ENCODE measurements at regions of chr2 and their contacts with region 1.

Region 1: DNA sequence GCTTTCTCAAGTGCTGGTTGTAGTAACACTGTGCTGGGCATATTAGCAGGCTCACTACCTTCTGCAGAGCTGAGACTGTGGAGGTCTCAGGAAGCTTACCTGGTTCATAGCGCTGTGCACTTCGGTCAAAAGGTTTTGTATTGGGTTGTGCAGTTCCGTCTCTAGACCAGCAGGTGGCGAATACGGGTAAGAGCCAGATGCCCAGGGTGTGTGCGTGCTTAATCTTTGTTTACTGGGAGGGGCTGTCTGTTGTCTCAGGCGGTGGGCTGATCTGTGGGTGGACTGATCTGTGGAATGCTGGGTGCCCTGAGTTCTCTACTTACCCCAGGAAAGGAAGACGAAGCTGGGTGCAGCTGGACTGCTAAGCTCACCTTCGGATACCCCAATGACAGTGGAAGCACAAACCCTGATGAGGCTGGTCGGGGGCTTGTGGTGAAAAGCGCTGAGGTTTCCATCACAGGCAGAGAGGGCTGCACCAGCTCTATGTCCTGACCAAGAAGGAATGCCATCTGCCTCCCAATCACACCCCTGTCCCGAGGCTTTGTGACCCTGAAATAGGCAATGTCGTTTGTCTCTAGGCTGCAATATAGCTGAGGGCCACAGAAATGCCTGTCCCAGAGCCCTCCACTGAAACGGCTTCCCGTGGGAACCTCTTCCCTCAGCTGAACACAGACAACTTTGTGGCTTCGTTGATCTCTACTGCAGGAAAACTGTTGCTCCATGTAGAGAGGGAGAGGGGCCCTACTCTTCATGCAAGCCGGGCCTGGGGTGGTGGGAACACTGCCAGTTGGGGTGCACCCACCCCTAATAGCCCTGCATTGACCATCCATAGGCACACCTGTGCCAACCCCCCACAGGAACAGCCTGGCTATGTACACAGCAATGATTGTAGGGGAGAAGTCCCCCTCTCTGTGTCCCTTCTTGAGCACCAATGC is 45.9 kb upstream of the FAM117B start:
- DNase-seq: peak; percentile 64
- ATAC-seq: peak; percentile 97
- H3K4me3 ChIP-seq: no peak overlapping the region
- H3K27ac ChIP-seq: no peak overlapping the region
- H3K4me1 ChIP-seq: peaks cover 0 to 9% of the 10 kb centered on the region in 2 experiments; a peak in 2 of 4 replicates
- H3K27me3 ChIP-seq: no peaks in the 10 kb centered on the region
- CTCF ChIP-seq: peak; percentile 83 to 94 (median 89)
- POLR2A ChIP-seq: no peak
- RAD21 ChIP-seq: peak; percentile 91

Region 2: GRCh38 chr2:202375609-202376408 is 213.1 kb before region 1 on chr2 and contains the start of gene BMPR2:
- CTCF ChIA-PET with region 1: no interaction called
- POLR2A ChIA-PET with region 1: no interaction called
- RAD21 ChIA-PET with region 1: no interaction called
- intact Hi-C with region 1: no loop called
- DNase-seq: peak; percentile 56
- ATAC-seq: peak; percentile 87
- H3K4me3 ChIP-seq: peak within 1 kb of the TSS; percentile 69 to 80
- H3K27ac ChIP-seq: peak within 1 kb of the TSS; percentile 74
- H3K4me1 ChIP-seq: peaks cover 13 to 17% of the 10 kb centered on the region in 2 experiments; a peak in 3 of 4 replicates
- H3K27me3 ChIP-seq: no peaks in the 10 kb centered on the region
- CTCF ChIP-seq: no peak
- POLR2A ChIP-seq: peak; percentile 68
- RAD21 ChIP-seq: no peak
- total RNA-seq, gene BMPR2: 12.8 TPM

Region 3: DNA sequence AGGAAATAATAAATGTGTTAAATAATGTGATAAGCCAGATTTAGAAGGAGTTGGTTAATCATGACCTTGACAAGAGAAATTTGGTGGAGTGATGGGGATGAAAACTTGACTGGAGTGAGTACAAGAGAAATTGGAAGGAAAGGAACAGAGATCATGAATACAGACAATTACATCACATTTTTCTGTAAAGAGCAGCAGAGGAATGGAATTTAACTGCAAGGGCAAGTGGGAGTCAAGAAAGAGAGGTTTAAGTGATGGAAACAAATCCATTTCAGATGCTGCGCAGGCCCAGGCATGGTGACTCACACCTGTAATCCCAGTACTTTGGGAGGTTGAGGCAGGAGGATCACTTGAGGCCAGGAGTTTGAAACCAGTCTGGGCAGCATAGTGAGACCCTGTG is 236.0 kb after region 1 on chr2:
- CTCF ChIA-PET with region 1: interaction called, 5 read pairs
- POLR2A ChIA-PET with region 1: no interaction called
- RAD21 ChIA-PET with region 1: no interaction called
- intact Hi-C with region 1: loop called (anchors 5 kb)
- DNase-seq: no peak
- ATAC-seq: no peak
- H3K4me3 ChIP-seq: no peak overlapping the region
- H3K27ac ChIP-seq: no peak overlapping the region
- H3K4me1 ChIP-seq: no peaks in the 10 kb centered on the region
- H3K27me3 ChIP-seq: no peaks in the 10 kb centered on the region
- CTCF ChIP-seq: no peak
- POLR2A ChIP-seq: no peak
- RAD21 ChIP-seq: no peak

Region 4: DNA sequence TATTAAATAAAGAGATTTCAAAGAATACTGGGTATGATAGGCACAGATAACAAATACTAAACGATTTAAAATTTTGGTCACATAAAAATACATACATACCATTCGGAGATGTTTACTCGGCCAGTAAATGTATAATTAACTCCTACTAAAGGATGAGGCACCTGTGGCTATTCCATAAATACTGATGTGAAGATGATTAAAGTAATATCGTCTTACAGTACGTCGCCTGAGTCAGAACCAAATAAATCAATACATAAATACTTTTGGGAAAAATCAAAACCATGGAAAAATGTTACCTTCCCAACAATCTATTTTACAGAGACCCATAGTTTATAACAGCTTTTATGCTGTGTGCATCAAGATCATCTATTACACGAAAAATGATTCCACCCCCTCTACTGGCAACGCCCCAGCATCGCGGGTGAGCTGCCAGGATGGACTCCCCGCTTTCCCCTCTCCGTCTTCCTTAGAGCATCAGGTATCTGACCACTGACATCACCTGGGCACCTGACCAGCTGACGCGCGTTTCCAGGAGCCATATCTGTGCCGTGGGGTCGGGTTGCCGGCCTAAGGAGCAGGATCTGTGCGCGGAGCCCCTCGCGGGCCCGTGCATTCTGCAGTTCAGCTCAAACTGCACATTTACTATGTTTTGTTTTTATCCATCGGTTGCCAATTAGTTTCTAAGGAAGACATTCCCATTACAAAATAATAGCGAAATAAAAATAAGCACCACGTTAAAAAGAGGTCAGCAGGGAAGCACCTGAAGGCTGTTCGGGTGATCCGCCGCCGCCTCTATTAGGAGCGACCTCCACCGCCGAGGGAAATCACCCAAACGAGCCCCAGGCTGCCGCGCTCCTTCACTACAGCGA is 281.8 kb after region 1 on chr2:
- CTCF ChIA-PET with region 1: interaction called, 4 read pairs
- POLR2A ChIA-PET with region 1: no interaction called
- RAD21 ChIA-PET with region 1: no interaction called
- intact Hi-C with region 1: loop called (anchors 5 kb)
- DNase-seq: peak; percentile 78
- ATAC-seq: peak; percentile 86
- H3K4me3 ChIP-seq: peak overlapping the region; percentile 61 to 68
- H3K27ac ChIP-seq: peak overlapping the region; percentile 38
- H3K4me1 ChIP-seq: peaks cover 7 to 13% of the 10 kb centered on the region in 2 experiments
- H3K27me3 ChIP-seq: no peaks in the 10 kb centered on the region
- CTCF ChIP-seq: peak; percentile 34 to 59 (median 55); a peak in 5 of 6 replicates
- POLR2A ChIP-seq: peak; percentile 41
- RAD21 ChIP-seq: peak; percentile 52

Region 5: DNA sequence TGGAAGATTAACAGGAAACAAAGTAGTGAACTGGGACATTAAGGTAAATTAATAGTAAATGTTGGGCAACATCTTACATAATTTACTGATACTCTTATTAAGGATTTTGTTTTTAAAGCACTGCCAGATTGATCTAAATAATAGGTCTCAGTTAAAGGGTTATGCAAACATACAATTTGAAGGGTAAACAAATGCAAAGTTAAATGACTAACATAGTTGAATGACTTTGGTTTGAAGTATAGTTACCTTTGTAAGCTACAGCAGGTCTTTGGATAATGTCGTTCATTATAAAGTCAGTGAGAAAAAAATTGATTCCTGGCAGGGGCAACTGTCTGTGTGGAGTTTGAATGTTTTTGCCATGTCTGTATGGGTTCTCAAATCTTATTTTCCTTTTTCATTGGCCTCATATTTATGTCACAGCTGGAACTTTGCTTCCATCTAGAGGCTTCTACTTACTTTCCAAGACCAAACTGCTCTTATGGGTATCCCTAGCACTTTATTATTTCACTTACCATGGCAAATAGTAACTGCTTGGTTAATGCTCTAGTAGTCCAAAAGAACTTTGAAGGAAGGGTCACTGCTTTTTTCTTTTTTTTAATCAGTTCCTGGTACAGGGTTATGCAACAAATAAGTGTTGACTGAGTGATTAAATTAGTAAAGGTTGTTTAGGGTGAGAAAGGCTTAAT is 533.5 kb after region 1 on chr2:
- CTCF ChIA-PET with region 1: no interaction called
- POLR2A ChIA-PET with region 1: no interaction called
- RAD21 ChIA-PET with region 1: no interaction called
- intact Hi-C with region 1: loop called (anchors 1 kb)
- DNase-seq: no peak
- ATAC-seq: no peak
- H3K4me3 ChIP-seq: no peak overlapping the region
- H3K27ac ChIP-seq: no peak overlapping the region
- H3K4me1 ChIP-seq: no peaks in the 10 kb centered on the region
- H3K27me3 ChIP-seq: no peaks in the 10 kb centered on the region
- CTCF ChIP-seq: peak in 1 of 3 experiments; percentile 32; a peak in 2 of 6 replicates
- POLR2A ChIP-seq: no peak
- RAD21 ChIP-seq: peak; percentile 50

Region 6: DNA sequence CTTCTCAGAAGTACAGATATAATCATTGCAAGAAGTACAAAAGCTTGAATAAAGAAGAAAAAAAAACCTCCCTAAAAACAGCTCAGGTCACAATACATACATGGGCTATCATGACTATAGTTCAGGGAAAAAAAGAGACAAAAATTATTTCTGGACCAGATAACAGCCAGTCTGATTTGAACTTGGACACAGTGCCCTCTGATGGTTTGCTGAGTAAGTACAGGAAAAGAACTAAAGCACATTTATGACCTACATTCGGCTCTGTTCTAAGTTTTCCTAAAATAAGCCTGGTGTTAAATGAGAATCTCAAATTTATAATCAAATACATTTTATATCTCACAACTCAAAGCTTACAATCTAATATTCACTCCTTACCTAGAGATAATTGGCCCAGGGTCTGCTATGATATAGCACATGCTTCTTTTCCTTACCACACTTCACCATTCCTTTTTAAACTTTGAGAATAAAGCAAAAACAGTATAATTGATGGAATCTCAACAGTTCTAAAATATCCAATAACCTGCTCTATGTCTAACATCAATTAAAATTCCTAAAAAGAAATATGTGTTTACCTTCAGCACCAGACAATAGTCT is 865.0 kb after region 1 on chr2:
- CTCF ChIA-PET with region 1: no interaction called
- POLR2A ChIA-PET with region 1: no interaction called
- RAD21 ChIA-PET with region 1: no interaction called
- intact Hi-C with region 1: loop called (anchors 5 kb)
- DNase-seq: peak; percentile 45
- ATAC-seq: peak; percentile 77
- H3K4me3 ChIP-seq: no peak overlapping the region
- H3K27ac ChIP-seq: no peak overlapping the region
- H3K4me1 ChIP-seq: peaks cover 11 to 15% of the 10 kb centered on the region in 2 experiments
- H3K27me3 ChIP-seq: no peaks in the 10 kb centered on the region
- CTCF ChIP-seq: peak; percentile 61 to 82 (median 65)
- POLR2A ChIP-seq: no peak
- RAD21 ChIP-seq: peak; percentile 88

Region 7: DNA sequence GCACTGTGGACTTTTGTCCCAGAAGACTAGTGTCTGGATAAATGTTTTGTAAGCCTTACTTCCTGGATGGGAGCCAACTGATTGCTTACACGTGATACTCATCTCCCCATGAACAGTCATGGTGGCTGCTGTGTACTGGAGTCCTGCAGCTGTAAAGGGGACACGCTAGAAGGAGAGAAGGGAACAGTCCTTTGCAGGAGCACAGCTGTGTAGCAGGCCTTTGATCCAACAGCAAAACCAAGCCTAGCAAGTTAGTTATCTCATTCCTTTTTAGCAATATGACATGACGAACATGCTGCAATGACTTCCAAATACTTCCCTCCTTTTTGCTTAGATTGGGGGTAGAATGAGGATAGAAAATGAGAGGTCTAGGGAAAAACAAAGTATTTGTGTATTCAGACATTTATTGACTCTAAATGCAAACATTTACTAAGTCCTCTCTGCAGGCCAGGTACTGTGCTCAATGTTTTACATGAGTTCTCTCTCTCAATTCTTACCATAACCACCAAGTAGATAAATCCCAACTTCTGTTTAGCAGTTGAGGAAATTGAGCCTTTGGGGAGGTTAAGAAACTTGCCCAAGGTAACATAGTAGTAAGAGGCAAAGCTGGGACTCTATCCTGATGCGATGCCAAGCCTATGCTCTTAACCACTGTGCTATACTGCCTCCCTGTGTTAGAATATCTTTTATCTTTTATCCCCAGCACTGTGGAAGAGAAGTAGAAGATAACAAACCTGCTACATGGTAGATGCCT is 1062.1 kb after region 1 on chr2:
- CTCF ChIA-PET with region 1: no interaction called
- POLR2A ChIA-PET with region 1: no interaction called
- RAD21 ChIA-PET with region 1: no interaction called
- intact Hi-C with region 1: loop called (anchors 10 kb)
- DNase-seq: peak; percentile 37
- ATAC-seq: peak; percentile 88
- H3K4me3 ChIP-seq: no peak overlapping the region
- H3K27ac ChIP-seq: no peak overlapping the region
- H3K4me1 ChIP-seq: peaks cover 0 to 9% of the 10 kb centered on the region in 2 experiments; a peak in 3 of 4 replicates
- H3K27me3 ChIP-seq: no peaks in the 10 kb centered on the region
- CTCF ChIP-seq: peak; percentile 14 to 74 (median 60); a peak in 5 of 6 replicates
- POLR2A ChIP-seq: no peak
- RAD21 ChIP-seq: peak; percentile 90